ENCODE measurements at regions of chr7 and their contacts with region 1.

Region 1: GRCh38 chr7:22920672-22921071 is 93.3 kb downstream of the HYCC1 start:
- DNase-seq: no peak
- H3K4me3 ChIP-seq: no peak overlapping the region
- H3K27ac ChIP-seq: no peak overlapping the region
- H3K4me1 ChIP-seq: no peaks in the 10 kb centered on the region
- H3K27me3 ChIP-seq: no peaks in the 10 kb centered on the region
- CTCF ChIP-seq: no peak
- POLR2A ChIP-seq: no peak

Region 2: DNA sequence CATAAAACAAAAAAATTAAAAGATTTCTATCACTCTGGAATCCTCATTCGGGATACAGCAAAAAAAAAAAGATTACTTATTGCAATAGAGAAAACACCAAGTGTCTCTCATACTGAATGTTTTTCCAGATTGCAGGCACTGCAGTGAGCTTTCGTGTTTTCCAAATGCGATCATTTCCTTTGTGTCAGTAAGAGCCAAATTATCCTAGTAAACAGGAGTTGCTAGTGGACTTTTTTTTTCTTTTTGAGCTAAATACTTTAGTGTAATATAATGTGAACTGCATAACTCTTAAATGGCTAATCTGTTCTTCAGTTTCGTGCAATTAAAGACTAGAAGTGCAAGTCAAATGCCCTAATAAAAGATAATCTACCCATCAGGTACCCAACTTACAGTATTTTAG is 53.7 kb before region 1 on chr7:
- CTCF ChIA-PET with region 1: no interaction called
- POLR2A ChIA-PET with region 1: interaction called, 13 read pairs
- dilution Hi-C with region 1: no loop called
- intact Hi-C with region 1: no loop called
- DNase-seq: peak; percentile 61
- H3K4me3 ChIP-seq: no peak overlapping the region
- H3K27ac ChIP-seq: no peak overlapping the region
- H3K4me1 ChIP-seq: peaks cover 5% of the 10 kb centered on the region
- H3K27me3 ChIP-seq: no peaks in the 10 kb centered on the region
- CTCF ChIP-seq: no peak
- POLR2A ChIP-seq: no peak

Measured in endothelial cell of umbilical vein (primary cell).